ENCODE measurements at regions of chr6 and their contacts with region 1.

Region 1: DNA sequence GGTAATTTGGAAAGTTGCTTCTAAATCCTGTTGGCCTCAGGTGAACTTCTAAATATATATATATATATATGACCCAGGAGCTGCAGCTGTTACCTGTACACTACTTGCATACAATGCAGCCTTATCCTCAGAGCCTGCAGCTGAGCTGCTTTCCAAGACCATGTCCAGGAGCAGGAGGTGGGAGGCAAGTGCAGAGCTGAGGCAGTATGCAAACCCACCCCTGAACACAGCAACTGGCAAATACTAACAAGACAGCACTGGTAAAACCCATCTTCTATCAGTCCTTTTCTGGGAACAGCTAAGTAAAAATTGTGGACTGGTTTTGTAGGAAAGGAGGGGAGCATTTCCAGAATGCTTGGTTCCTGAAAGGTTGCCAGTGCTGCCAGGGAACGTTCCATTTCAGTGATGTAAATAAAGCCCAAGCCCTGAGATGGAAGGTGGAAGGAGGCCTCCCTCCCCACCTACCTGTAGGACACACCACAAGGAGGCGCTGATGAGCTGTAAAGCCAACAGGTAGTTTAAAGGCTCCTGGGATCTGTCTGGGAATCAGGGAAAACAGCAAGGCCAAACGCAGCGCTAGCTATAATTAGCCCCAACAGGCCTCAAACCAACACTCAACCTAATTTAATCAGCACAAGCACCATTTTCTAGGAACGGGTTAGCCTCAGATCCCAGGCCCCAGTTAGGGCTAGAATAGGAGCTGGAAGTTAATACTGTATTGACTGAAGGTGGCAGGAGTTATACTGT is 93.8 kb upstream of the MAP7 start:
- DNase-seq: peak; percentile 92
- ATAC-seq: peak; percentile 95

Region 2: GRCh38 chr6:136685540-136686108 is 41.6 kb after region 1 on chr6:
- intact Hi-C with region 1: no loop called
- DNase-seq: no peak
- ATAC-seq: no peak

Region 3: DNA sequence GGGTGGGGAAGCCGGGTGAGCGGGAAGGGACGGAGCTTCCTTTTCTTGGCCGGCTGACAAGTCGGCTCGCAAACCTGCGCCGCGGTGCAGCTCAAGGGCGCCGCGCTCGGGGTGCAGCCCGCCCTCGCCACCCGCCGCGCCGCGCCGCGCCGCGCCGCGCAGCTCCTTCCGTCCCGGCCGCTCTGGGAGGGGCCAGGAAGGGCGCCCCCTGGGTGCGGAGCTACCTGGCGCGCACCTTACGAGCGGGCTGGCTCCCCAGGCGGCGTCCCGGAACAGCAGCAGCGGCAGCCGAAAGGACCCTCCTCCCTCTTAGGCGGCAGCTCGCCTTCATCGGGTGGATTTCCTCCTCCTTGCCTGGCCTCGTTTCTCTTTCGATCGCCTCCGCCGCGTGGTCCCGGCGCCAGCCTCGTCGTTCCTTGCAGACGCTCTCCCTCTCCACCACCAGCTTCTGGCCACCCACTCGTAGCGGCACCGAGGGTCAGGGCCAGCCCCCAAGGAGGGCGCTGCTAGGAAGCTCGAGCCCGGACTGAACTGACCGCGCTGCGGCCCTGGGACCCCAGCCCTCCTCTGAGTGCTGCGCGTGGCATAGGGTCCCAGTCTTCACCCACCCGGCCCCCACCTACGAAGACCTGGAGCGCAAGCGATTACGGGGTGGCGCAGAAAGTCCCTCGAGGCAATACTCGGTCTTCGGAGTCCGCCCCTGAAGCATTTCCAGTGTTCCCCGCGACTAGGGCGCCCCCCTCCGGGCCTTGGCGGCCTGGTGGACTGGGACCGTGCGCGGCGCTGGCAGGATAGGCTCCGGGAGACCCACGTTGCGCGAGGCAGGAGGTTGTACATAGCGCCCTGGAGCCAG is 148.6 kb after region 1 on chr6 and contains the start of gene MAP3K5:
- intact Hi-C with region 1: loop called (anchors 5 kb)
- DNase-seq: peak; percentile 97
- ATAC-seq: peak; percentile 91
- total RNA-seq, gene MAP3K5: 38.5 TPM